PC-9 (cell line): ENCODE measurements at regions of chr15 and their contacts with region 1.

Region 1: GRCh38 chr15:70327856-70328678 is 230.3 kb upstream of the TLE3 start:
- DNase-seq: peak in 1 of 2 experiments; percentile 49
- H3K4me3 ChIP-seq: no peak overlapping the region
- H3K27ac ChIP-seq: no peak overlapping the region
- H3K4me1 ChIP-seq: peaks cover 31% of the 10 kb centered on the region
- H3K27me3 ChIP-seq: no peaks in the 10 kb centered on the region
- CTCF ChIP-seq: no peak

Region 2: GRCh38 chr15:69414701-69415161 is 913.3 kb before region 1 on chr15:
- CTCF ChIA-PET with region 1: no interaction called
- POLR2A ChIA-PET with region 1: no interaction called
- intact Hi-C with region 1: no loop called
- DNase-seq: peak; percentile 72 to 78
- H3K4me3 ChIP-seq: peak overlapping the region; percentile 86
- H3K27ac ChIP-seq: peak overlapping the region; percentile 63
- H3K4me1 ChIP-seq: peaks cover 39% of the 10 kb centered on the region
- H3K27me3 ChIP-seq: no peaks in the 10 kb centered on the region
- CTCF ChIP-seq: no peak

Region 3: GRCh38 chr15:70289203-70289955 is 38.7 kb before region 1 on chr15:
- CTCF ChIA-PET with region 1: no interaction called
- POLR2A ChIA-PET with region 1: no interaction called
- intact Hi-C with region 1: loop called (anchors 1 kb)
- DNase-seq: peak; percentile 86 to 90
- H3K4me3 ChIP-seq: no peak overlapping the region
- H3K27ac ChIP-seq: peak overlapping the region; percentile 61
- H3K4me1 ChIP-seq: peaks cover 39% of the 10 kb centered on the region
- H3K27me3 ChIP-seq: no peaks in the 10 kb centered on the region
- CTCF ChIP-seq: no peak

Region 4: GRCh38 chr15:70301392-70301791 is 26.7 kb before region 1 on chr15:
- CTCF ChIA-PET with region 1: no interaction called
- POLR2A ChIA-PET with region 1: no interaction called
- intact Hi-C with region 1: loop called (anchors 1 kb)
- DNase-seq: peak in 1 of 2 experiments; percentile 72
- H3K4me3 ChIP-seq: no peak overlapping the region
- H3K27ac ChIP-seq: no peak overlapping the region
- H3K4me1 ChIP-seq: peaks cover 11% of the 10 kb centered on the region
- H3K27me3 ChIP-seq: no peaks in the 10 kb centered on the region
- CTCF ChIP-seq: no peak

Region 5: DNA sequence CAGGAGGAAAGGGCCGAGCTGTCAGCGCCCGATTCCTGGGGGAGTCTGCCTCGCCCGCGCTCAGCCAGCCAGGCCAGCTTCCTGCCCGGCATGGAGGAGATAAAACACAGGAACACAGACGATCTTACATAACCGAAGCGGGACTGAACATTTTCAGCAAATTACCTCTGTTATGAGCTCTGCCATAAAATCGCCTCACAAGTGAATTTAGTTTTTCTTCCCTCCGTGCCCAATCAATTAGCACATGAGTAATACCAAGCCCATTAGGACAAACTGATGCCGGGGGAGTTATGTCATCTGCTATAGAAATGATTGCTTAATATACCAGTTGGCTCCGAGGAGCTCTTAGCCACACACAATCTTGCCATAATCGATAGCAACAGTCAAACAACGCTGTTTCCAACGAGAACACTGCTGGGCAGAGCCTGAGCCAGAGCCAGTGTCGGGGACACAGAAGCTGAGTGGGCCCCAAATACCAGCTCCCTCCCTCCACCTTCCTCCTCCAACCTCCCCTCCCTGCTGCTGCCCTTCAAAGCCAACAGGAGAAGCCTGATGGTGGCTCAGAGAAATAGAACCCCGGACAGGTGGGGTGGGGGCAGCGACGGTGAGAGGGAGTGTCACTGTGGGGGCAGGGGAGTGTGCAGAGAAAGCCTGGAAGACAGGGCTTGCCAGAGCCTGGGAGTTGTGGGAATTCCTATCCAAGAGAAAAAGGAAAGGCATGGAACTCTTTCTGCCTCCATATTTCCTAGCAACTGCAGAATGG is 49.0 kb after region 1 on chr15:
- CTCF ChIA-PET with region 1: no interaction called
- POLR2A ChIA-PET with region 1: no interaction called
- intact Hi-C with region 1: loop called (anchors 5 kb)
- DNase-seq: no peak
- H3K4me3 ChIP-seq: no peak overlapping the region
- H3K27ac ChIP-seq: no peak overlapping the region
- H3K4me1 ChIP-seq: peaks cover 30% of the 10 kb centered on the region
- H3K27me3 ChIP-seq: no peaks in the 10 kb centered on the region
- CTCF ChIP-seq: no peak

Region 6: GRCh38 chr15:70421038-70421437 is 93.0 kb after region 1 on chr15:
- CTCF ChIA-PET with region 1: no interaction called
- POLR2A ChIA-PET with region 1: no interaction called
- intact Hi-C with region 1: no loop called
- DNase-seq: no peak
- H3K4me3 ChIP-seq: no peak overlapping the region
- H3K27ac ChIP-seq: no peak overlapping the region
- H3K4me1 ChIP-seq: peaks cover 9% of the 10 kb centered on the region
- H3K27me3 ChIP-seq: no peaks in the 10 kb centered on the region
- CTCF ChIP-seq: no peak

Region 7: GRCh38 chr15:70436428-70436827 is 108.4 kb after region 1 on chr15:
- CTCF ChIA-PET with region 1: no interaction called
- POLR2A ChIA-PET with region 1: no interaction called
- intact Hi-C with region 1: loop called (anchors 5 kb)
- DNase-seq: no peak
- H3K4me3 ChIP-seq: no peak overlapping the region
- H3K27ac ChIP-seq: no peak overlapping the region
- H3K4me1 ChIP-seq: peaks cover 65% of the 10 kb centered on the region
- H3K27me3 ChIP-seq: no peaks in the 10 kb centered on the region
- CTCF ChIP-seq: no peak

Region 8: GRCh38 chr15:70466895-70467529 is 138.9 kb after region 1 on chr15:
- CTCF ChIA-PET with region 1: no interaction called
- POLR2A ChIA-PET with region 1: no interaction called
- intact Hi-C with region 1: loop called (anchors 10 kb)
- DNase-seq: peak; percentile 42 to 49
- H3K4me3 ChIP-seq: no peak overlapping the region
- H3K27ac ChIP-seq: no peak overlapping the region
- H3K4me1 ChIP-seq: peaks cover 63% of the 10 kb centered on the region
- H3K27me3 ChIP-seq: no peaks in the 10 kb centered on the region
- CTCF ChIP-seq: peak; percentile 70